ENCODE measurements at regions of chr17 and their contacts with region 1.

Region 1: GRCh38 chr17:16129441-16130205 is 85.7 kb downstream of the NCOR1 start:
- DNase-seq: no peak
- H3K4me3 Mint-ChIP-seq: no peak overlapping the region
- H3K27ac Mint-ChIP-seq: no peak overlapping the region
- H3K4me1 Mint-ChIP-seq: no peaks in the 10 kb centered on the region
- H3K27me3 Mint-ChIP-seq: no peaks in the 10 kb centered on the region

Region 2: DNA sequence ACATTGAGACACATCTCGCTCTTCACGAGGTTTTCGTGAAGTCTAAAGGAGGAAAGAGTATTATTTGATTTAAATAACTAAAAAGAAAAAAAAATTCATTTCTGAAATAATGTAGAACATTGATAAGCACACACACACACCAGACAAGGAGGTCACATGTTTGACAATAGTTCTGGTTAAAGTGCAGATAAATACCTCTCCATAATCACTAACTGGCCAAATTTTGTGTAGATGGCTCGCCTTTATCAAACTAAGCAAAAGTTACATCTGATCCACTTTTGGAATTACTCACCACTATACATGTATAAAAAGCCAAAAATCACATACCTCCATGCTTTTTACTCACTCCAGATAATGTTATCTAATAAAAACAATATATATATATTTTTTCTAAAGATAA is 20.8 kb before region 1 on chr17:
- CTCF ChIA-PET with region 1: no interaction called
- intact Hi-C with region 1: no loop called
- DNase-seq: no peak
- H3K4me3 Mint-ChIP-seq: no peak overlapping the region
- H3K27ac Mint-ChIP-seq: no peak overlapping the region
- H3K4me1 Mint-ChIP-seq: no peaks in the 10 kb centered on the region
- H3K27me3 Mint-ChIP-seq: no peaks in the 10 kb centered on the region

Region 3: DNA sequence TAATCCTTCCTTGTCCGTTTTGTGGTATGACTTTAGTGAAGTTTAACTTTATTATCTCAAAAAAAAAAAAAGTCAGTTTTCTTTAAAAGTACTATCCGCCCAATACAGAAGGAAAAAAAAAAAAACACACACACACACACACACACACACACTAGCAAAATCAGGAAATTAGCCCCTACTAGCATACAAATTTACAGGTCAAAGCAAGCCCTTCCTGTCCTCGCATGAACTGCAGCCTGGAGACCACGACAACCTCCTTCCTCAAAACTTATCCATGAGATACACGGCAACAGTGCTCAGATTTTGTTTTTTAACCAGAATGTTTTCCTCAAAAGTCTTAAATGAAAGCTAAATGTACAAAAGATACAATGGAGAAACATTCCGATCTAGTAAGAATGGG is 69.5 kb after region 1 on chr17:
- CTCF ChIA-PET with region 1: no interaction called
- intact Hi-C with region 1: loop called (anchors 10 kb)
- DNase-seq: no peak
- H3K4me3 Mint-ChIP-seq: no peak overlapping the region
- H3K27ac Mint-ChIP-seq: no peak overlapping the region
- H3K4me1 Mint-ChIP-seq: peaks cover 52% of the 10 kb centered on the region
- H3K27me3 Mint-ChIP-seq: no peaks in the 10 kb centered on the region